ENCODE measurements at regions of chr3 and their contacts with region 1.

Region 1: GRCh38 chr3:73341272-73341892 is 279.9 kb downstream of the EBLN2 start:
- DNase-seq: no peak
- H3K4me3 ChIP-seq: no peak overlapping the region
- CTCF ChIP-seq: no peak
- POLR2A ChIP-seq: no peak

Region 2: DNA sequence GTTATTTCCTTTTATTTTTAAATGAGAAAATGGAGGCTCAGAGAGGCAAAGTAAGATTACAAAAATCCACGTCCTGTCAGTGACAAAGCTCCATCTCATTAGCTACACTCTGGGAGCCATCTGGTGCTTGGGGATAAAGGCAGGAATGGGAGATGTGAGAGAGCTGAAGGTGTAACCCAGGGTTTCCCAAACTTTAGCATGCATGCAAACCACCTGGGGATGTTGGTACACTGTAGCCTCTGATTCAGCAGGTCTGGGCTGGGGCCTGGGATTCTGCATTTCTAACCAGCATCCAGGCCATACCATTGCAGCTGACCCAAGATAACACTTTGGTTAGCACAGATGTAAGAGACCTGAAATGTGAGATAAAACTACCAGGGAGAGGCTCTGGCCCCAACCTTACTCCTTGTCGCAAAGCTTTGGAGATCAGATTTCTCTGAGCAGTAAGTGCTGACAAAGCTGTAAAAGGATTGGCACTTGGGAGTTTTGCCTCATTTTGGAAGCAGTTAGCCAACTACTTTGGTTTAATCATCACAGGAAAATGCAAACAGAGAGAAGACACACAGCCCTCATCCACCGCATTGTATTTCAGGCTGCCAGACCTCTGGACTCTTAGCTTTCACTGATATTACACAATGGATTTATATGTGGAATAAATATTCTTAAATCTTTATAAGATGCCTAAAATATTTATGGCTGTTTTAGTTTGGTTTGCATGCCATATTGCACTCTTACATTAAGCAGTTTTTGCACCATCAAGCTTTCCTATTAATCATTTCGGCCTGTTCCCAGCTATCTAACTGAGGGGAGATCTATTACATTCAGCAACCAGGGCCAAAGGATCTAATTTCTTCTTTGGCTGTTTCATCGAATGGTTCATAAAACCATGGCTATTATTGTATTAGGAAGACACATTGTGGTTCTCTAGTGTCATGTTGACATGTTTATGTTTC is 16.9 kb before region 1 on chr3:
- intact Hi-C with region 1: loop called (anchors 1 kb)
- DNase-seq: peak in 1 of 2 donors; percentile 14
- H3K4me3 ChIP-seq: no peak overlapping the region
- CTCF ChIP-seq: no peak
- POLR2A ChIP-seq: no peak

Measured in lower leg skin (tissue), 4 donors.